ENCODE measurements at regions of chr22 and their contacts with region 1.

Region 1: DNA sequence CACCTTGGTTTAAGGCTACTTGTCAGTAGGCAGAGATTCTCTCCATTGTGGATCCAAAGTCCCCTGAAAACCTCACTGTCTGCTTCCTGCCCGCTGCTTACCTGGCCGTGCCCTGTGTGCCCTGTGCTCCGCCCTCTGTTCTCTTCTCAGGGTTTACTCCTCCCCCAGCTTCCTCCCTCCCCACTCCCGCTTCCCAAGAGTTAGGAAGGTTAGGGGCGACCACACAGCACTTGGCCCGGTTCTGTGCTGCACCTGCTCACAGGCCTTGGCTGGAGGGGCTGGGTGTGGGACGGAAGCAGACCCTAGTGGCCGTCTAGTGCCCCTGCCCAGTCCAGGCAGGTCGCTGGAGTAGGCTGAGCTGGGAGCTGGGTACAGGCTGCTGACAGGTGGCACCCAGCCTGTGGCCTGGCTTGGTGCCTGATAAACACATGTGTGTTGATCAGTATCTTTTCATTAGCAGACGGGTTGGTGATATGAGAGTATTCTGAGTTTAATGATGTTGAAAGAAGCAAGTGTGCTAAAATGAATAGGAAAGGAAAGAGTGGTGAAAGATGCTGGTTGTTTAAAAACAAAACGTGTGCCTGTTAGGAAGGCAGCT is 40.5 kb downstream of the GRAMD4 start:
- DNase-seq: peak in 8 of 14 experiments; percentile 14 to 72 (median 35)
- ATAC-seq: peak; percentile 70
- H3K4me3 ChIP-seq: no peak overlapping the region
- H3K4me3 Mint-ChIP-seq: peak overlapping the region; percentile 4
- H3K27ac ChIP-seq: peak overlapping the region in 1 of 2 donors; percentile 12
- H3K27ac Mint-ChIP-seq: peak overlapping the region; percentile 87
- H3K4me1 ChIP-seq: peaks cover 29% of the 10 kb centered on the region
- H3K4me1 Mint-ChIP-seq: peaks cover 28% of the 10 kb centered on the region
- H3K27me3 ChIP-seq: no peaks in the 10 kb centered on the region
- H3K27me3 Mint-ChIP-seq: no peaks in the 10 kb centered on the region
- CTCF ChIP-seq: no peak

Region 2: DNA sequence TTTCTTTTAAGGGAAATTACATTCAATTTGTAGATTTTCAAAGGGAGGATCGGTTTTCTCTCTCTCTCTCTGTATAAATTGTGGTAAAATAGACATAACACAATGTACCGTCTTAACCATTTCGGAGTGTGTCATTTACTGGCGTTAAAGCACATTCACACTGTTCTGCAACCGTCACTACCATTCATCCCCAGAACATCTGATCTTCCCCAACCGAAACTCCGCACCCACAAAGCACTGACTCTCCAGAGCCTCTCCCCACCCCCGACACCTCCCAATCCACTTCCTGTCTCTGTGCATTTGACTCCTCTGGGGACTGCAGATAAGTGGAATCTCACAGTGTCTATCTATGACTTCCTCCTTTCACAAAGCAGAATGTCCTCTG is 56.4 kb before region 1 on chr22:
- CTCF ChIA-PET with region 1: no interaction called
- POLR2A ChIA-PET with region 1: no interaction called
- intact Hi-C with region 1: loop called in 1 of 2 experiments (anchors 5 kb)
- DNase-seq: peak in 9 of 14 experiments; percentile 13 to 67 (median 47)
- ATAC-seq: peak; percentile 88
- H3K4me3 ChIP-seq: peak overlapping the region; percentile 31
- H3K4me3 Mint-ChIP-seq: peak overlapping the region; percentile 64
- H3K27ac ChIP-seq: no peak overlapping the region
- H3K27ac Mint-ChIP-seq: peak overlapping the region; percentile 34
- H3K4me1 ChIP-seq: peaks cover 12% of the 10 kb centered on the region
- H3K4me1 Mint-ChIP-seq: peaks cover 10% of the 10 kb centered on the region
- H3K27me3 ChIP-seq: no peaks in the 10 kb centered on the region
- H3K27me3 Mint-ChIP-seq: no peaks in the 10 kb centered on the region
- CTCF ChIP-seq: no peak

Region 3: DNA sequence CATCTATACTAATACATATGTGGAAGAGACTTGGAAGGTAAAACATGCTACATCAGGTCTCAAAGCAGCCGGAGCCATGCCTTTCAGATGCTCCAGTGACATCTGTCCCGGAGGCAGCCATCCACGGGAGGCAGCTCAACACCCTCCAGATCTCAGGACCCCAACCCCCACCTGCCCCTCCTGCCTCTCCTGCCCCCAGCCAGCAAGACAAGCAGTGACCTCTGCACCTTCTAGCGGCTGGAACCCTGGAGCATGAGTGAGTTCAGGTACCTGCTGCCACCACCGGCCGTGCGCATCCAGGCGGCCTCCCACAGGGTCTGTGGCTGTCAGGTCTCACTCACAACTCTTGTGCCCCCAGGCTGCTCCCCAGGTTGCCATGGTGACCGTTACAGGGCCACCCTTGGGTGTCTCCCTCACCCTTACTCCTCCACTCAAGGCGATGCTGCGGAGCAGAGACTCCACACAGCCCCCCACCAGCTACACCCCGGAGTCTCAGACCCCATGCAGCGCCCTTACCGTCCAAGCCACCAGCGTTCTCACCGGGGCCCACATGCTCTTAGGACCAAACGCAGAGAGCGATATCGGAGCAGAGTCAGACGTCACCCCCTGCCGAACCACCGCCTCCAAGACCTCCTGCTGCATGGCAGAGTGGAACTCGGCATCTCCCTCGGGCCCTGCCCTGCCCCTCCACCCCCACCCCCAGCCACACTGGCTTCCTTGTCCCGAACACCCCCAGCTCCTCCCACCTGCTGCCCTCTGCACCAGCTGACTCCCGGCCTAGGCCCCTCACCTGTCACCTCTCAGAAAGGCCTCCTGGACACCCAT is 42.7 kb after region 1 on chr22:
- CTCF ChIA-PET with region 1: no interaction called
- POLR2A ChIA-PET with region 1: no interaction called
- intact Hi-C with region 1: no loop called
- DNase-seq: no peak
- ATAC-seq: no peak
- H3K4me3 ChIP-seq: no peak overlapping the region
- H3K4me3 Mint-ChIP-seq: no peak overlapping the region
- H3K27ac ChIP-seq: no peak overlapping the region
- H3K27ac Mint-ChIP-seq: no peak overlapping the region
- H3K4me1 ChIP-seq: no peaks in the 10 kb centered on the region
- H3K4me1 Mint-ChIP-seq: no peaks in the 10 kb centered on the region
- H3K27me3 ChIP-seq: no peaks in the 10 kb centered on the region
- H3K27me3 Mint-ChIP-seq: no peaks in the 10 kb centered on the region
- CTCF ChIP-seq: no peak